Calu3 (cell line): ENCODE measurements at regions of chr7 and their contacts with region 1.

Region 1: DNA sequence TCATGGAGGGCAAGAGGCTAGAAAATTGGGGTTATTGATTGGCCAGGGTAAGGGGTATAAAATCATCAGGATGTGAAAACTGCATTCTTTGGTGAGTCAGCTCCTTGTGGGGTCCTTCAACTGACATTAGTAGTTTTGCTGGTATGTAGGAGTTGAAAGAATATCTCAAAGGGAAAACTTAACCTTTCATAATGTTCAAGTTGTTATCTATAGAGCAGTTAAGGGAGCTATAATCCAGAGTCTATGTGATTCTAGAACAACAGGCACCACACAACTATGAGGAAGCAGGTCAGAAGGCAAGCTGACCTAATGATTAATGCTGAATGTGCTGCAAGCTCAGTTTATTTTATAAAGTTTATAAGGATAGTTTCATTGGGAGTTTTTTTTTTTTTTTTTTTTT is 13.7 kb downstream of the PRPS1L1 start:
- DNase-seq: peak; percentile 59
- H3K4me3 Mint-ChIP-seq: peak overlapping the region; percentile 15
- H3K27ac Mint-ChIP-seq: peak overlapping the region; percentile 72
- H3K4me1 Mint-ChIP-seq: peaks cover 53% of the 10 kb centered on the region
- H3K27me3 Mint-ChIP-seq: no peaks in the 10 kb centered on the region
- CTCF ChIP-seq: no peak

Region 2: DNA sequence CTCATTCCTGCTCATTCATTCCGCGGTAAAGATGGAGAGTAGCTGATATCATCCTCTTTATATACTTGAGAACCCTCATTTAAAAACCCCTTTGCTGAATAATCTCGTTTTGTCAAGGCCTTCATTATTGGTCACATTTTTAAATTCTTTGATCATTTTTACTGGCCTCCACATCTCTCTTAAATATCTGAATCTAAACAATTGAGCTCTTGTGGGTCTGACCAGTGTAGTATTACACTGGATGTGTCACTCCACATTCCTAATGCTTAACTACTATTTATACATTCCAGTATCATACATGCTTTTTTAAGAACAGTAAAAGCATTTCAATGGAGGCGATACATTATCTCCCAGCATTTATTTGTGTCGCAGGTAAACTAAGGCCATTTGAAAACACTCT is 26.3 kb after region 1 on chr7:
- CTCF ChIA-PET with region 1: interaction called, 16 read pairs
- intact Hi-C with region 1: no loop called
- DNase-seq: peak; percentile 27
- H3K4me3 Mint-ChIP-seq: peak overlapping the region; percentile 3
- H3K27ac Mint-ChIP-seq: peak overlapping the region; percentile 2
- H3K4me1 Mint-ChIP-seq: peaks cover 30% of the 10 kb centered on the region
- H3K27me3 Mint-ChIP-seq: no peaks in the 10 kb centered on the region
- CTCF ChIP-seq: no peak

Region 3: DNA sequence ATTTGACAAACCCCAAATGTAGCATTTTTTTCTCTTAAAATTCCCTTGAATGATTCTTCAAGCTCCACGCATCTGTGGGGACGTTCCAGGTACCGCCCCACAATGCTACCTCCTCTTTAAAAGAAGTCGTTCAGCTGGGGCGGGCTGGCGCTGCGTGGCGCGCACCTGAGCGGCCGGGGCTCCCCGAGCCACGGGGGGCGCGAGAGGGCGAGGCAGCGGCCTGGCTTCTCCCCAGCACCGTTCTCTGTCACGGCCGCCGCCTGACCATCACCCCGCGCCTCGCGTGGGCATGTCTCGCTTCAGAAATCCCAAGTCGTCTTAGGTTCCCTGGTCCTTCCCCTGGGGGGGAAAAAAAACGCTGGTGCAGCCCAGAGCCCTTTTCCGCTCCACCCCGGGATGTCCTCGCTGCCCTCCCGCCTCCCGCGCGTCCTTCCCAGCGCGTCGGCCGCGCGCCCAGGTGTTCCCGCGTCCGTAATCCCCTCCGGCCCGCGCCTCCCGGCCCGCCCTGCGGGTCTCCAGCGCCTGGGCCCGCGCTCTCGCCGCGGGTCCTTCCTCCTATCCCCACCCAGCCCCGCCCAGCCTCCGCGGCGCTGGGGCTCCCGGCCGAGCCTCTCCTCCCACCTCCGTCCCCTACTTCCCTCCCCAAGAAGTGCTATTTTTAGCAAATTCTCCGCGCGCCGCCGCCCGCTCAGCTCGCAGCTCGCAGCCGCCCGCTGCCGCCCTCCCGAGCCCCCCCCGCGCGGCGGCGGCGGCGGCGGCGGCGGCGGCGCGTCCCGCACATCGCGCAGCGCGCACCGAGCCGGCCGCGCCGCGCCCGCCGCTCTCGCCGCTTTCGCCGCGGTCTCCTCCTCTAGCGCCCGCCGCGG is 72.5 kb after region 1 on chr7:
- CTCF ChIA-PET with region 1: interaction called, 3 read pairs
- intact Hi-C with region 1: loop called (anchors 5 kb)
- DNase-seq: peak; percentile 73
- H3K4me3 Mint-ChIP-seq: peak overlapping the region; percentile 97
- H3K27ac Mint-ChIP-seq: peak overlapping the region; percentile 74
- H3K4me1 Mint-ChIP-seq: peaks cover 30% of the 10 kb centered on the region
- H3K27me3 Mint-ChIP-seq: no peaks in the 10 kb centered on the region
- CTCF ChIP-seq: peak; percentile 44

Region 4: GRCh38 chr7:18102576-18102975 is 88.6 kb after region 1 on chr7:
- CTCF ChIA-PET with region 1: no interaction called
- intact Hi-C with region 1: no loop called
- DNase-seq: no peak
- H3K4me3 Mint-ChIP-seq: no peak overlapping the region
- H3K27ac Mint-ChIP-seq: no peak overlapping the region
- H3K4me1 Mint-ChIP-seq: no peaks in the 10 kb centered on the region
- H3K27me3 Mint-ChIP-seq: no peaks in the 10 kb centered on the region
- CTCF ChIP-seq: no peak

Region 5: GRCh38 chr7:18202315-18203045 is 188.5 kb after region 1 on chr7:
- CTCF ChIA-PET with region 1: no interaction called
- intact Hi-C with region 1: no loop called
- DNase-seq: no peak
- H3K4me3 Mint-ChIP-seq: no peak overlapping the region
- H3K27ac Mint-ChIP-seq: no peak overlapping the region
- H3K4me1 Mint-ChIP-seq: peaks cover 31% of the 10 kb centered on the region
- H3K27me3 Mint-ChIP-seq: no peaks in the 10 kb centered on the region
- CTCF ChIP-seq: no peak